Left ventricle myocardium superior (tissue), 1 donor: ENCODE measurements at regions of chr7 and their contacts with region 1.

Region 1: GRCh38 chr7:36291387-36292316 is 98.0 kb upstream of the ANLN start:
- DNase-seq: peak; percentile 91
- ATAC-seq: peak; percentile 95

Region 2: DNA sequence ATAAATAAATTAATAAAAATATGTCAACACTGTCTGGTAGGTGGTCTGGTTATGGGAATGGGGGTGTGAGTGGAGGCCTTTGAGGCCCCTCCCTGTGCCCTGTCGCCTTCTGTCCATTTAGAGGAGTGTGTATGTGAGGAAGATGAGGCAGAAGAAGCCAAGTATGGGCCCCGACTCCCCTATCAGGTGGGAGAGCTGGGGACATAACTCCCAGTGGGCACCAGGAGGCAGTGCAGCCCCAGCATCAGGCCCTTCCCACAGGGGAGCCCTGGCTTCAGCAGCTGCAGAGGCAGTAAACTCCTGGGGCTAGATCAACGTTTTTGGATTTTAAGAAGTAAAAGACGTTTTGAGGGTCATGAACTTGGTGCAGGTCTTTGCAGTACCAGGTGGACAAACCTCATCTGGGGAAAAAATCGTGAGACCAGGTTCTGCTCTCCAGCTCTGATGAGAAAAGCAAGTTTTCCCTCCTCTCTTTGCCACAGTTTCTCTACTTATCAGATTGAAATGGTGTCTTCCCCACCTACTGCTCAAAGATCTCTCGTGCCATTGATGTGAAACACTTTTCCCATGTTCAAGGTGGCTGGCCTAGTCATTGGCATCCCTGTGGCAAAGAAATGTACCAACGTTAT is 306.4 kb before region 1 on chr7:
- intact Hi-C with region 1: loop called (anchors 1 kb)
- DNase-seq: peak; percentile 86
- ATAC-seq: peak; percentile 98

Region 3: DNA sequence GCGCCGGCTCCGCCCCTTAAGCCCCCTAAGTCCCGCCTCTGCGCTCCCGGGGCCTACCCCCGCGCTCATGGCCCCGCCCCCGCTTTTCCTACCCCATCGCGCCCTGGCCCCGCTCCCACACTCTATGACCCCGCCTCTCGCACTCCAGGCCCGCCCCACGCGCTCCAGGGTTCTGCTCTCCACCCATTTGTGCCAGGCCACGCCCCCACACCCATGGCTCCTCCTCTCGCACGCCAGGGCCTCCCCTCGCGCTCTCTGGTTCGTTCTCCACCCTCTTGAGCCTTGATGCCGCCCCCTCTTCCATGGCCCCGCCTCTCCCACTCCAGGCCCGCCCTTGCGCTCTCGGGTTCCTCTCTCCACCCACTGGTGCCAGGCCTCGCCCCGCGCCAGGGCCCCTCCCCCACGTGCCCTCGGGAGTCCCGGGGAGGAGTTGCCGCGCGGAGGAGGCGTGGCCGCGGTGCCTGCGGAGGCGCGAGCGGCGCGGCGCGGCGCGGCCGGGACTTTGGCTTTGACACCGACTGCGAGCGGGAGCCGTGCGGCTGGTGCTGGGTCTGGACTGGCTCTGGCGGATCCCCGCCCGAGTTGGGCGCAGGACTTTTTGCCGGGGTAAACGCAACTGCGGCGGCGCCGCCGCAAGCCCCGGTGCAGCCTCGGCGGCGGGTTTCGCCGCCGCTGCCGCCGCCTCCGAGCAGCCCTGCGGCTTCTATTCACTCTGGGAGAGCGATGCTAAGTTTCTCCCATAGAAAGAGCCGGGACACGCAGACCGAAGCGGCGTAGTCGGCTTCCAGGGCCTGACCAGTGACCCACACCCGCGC is 138.7 kb before region 1 on chr7 and contains the start of gene EEPD1:
- intact Hi-C with region 1: loop called (anchors 10 kb)
- DNase-seq: peak; percentile 100
- ATAC-seq: peak; percentile 96
- total RNA-seq, gene EEPD1: 9.6 TPM

Region 4: DNA sequence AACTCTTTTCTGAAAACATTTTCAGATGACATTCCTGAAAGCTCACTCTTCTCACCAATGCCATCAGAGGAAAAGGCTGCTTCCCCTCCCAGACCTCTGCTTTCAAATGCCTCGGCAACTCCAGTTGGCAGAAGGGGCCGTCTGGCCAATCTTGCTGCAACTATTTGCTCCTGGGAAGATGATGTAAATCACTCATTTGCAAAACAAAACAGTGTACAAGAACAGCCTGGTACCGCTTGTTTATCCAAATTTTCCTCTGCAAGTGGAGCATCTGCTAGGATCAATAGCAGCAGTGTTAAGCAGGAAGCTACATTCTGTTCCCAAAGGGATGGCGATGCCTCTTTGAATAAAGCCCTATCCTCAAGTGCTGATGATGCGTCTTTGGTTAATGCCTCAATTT is 114.5 kb after region 1 on chr7:
- intact Hi-C with region 1: no loop called
- DNase-seq: no peak
- ATAC-seq: no peak